ENCODE measurements at regions of chr2 and their contacts with region 1.

Region 1: GRCh38 chr2:237012577-237013267 is 73.0 kb upstream of the COPS8 start:
- DNase-seq: peak; percentile 96
- H3K4me3 ChIP-seq: no peak overlapping the region
- H3K27ac ChIP-seq: peak overlapping the region; percentile 54
- H3K4me1 ChIP-seq: peaks cover 24% of the 10 kb centered on the region
- H3K27me3 ChIP-seq: no peaks in the 10 kb centered on the region
- CTCF ChIP-seq: no peak
- POLR2A ChIP-seq: no peak

Region 2: GRCh38 chr2:236507393-236508085 is 505.2 kb before region 1 on chr2:
- CTCF ChIA-PET with region 1: interaction called, 5 read pairs
- POLR2A ChIA-PET with region 1: no interaction called
- dilution Hi-C with region 1: no loop called
- intact Hi-C with region 1: loop called (anchors 5 kb)
- DNase-seq: peak; percentile 66
- H3K4me3 ChIP-seq: peak overlapping the region; percentile 40 to 75 (median 59)
- H3K27ac ChIP-seq: no peak overlapping the region
- H3K4me1 ChIP-seq: peaks cover 22% of the 10 kb centered on the region
- H3K27me3 ChIP-seq: peaks cover 4 to 9% of the 10 kb centered on the region in 2 experiments
- CTCF ChIP-seq: no peak
- POLR2A ChIP-seq: no peak

Region 3: GRCh38 chr2:236642584-236643291 is 370.0 kb before region 1 on chr2:
- CTCF ChIA-PET with region 1: no interaction called
- POLR2A ChIA-PET with region 1: no interaction called
- dilution Hi-C with region 1: no loop called
- intact Hi-C with region 1: loop called (anchors 5 kb)
- DNase-seq: peak; percentile 70
- H3K4me3 ChIP-seq: no peak overlapping the region
- H3K27ac ChIP-seq: no peak overlapping the region
- H3K4me1 ChIP-seq: peaks cover 6% of the 10 kb centered on the region
- H3K27me3 ChIP-seq: no peaks in the 10 kb centered on the region
- CTCF ChIP-seq: no peak
- POLR2A ChIP-seq: no peak

Region 4: GRCh38 chr2:236824877-236825692 is 187.6 kb before region 1 on chr2:
- CTCF ChIA-PET with region 1: interaction called, 3 read pairs
- POLR2A ChIA-PET with region 1: no interaction called
- dilution Hi-C with region 1: no loop called
- intact Hi-C with region 1: loop called (anchors 1 kb)
- DNase-seq: peak; percentile 18
- H3K4me3 ChIP-seq: no peak overlapping the region
- H3K27ac ChIP-seq: no peak overlapping the region
- H3K4me1 ChIP-seq: peaks cover 37% of the 10 kb centered on the region
- H3K27me3 ChIP-seq: no peaks in the 10 kb centered on the region
- CTCF ChIP-seq: no peak
- POLR2A ChIP-seq: no peak

Region 5: GRCh38 chr2:236946871-236947270 is 65.9 kb before region 1 on chr2:
- CTCF ChIA-PET with region 1: no interaction called
- POLR2A ChIA-PET with region 1: no interaction called
- dilution Hi-C with region 1: no loop called
- intact Hi-C with region 1: loop called (anchors 5 kb)
- DNase-seq: peak; percentile 98
- H3K4me3 ChIP-seq: no peak overlapping the region
- H3K27ac ChIP-seq: peak overlapping the region; percentile 69
- H3K4me1 ChIP-seq: peaks cover 11% of the 10 kb centered on the region
- H3K27me3 ChIP-seq: no peaks in the 10 kb centered on the region
- CTCF ChIP-seq: no peak
- POLR2A ChIP-seq: peak; percentile 73

Region 6: DNA sequence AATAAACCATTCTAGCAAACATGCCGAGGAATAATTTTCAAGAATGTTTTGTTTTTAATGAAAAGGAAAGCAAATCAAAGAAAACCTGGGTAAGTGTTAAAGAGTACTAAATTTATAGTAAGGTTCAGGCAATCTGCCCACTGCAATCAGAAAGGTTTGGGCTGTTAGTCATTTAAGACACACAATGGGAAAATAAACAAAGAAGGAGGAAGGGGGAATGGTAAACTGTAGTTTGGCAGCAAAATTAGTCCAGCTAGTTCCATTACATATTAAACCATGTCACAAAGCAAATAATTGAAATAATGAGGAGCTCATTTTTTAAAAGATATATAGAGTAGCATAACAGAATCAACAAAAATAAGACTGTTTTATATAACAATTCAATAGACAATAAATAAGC is 14.5 kb before region 1 on chr2:
- CTCF ChIA-PET with region 1: interaction called, 14 read pairs
- POLR2A ChIA-PET with region 1: no interaction called
- dilution Hi-C with region 1: no loop called
- intact Hi-C with region 1: loop called (anchors 1 kb)
- DNase-seq: peak; percentile 88
- H3K4me3 ChIP-seq: peak overlapping the region in 1 of 3 experiments; percentile 5
- H3K27ac ChIP-seq: peak overlapping the region; percentile 88
- H3K4me1 ChIP-seq: peaks cover 33% of the 10 kb centered on the region
- H3K27me3 ChIP-seq: no peaks in the 10 kb centered on the region
- CTCF ChIP-seq: no peak
- POLR2A ChIP-seq: no peak

Measured in endothelial cell of umbilical vein (primary cell).